ENCODE measurements at regions of chr13 and their contacts with region 1.

Region 1: GRCh38 chr13:98129059-98129746 is 13.7 kb upstream of the FARP1 start:
- DNase-seq: no peak
- H3K4me3 ChIP-seq: no peak overlapping the region
- H3K27ac ChIP-seq: no peak overlapping the region
- H3K4me1 ChIP-seq: no peaks in the 10 kb centered on the region
- H3K27me3 ChIP-seq: no peaks in the 10 kb centered on the region
- CTCF ChIP-seq: no peak
- EP300 ChIP-seq: no peak
- POLR2A ChIP-seq: no peak

Region 2: GRCh38 chr13:97798836-97799235 is 330.4 kb before region 1 on chr13:
- intact Hi-C with region 1: no loop called
- DNase-seq: no peak
- H3K4me3 ChIP-seq: no peak overlapping the region
- H3K27ac ChIP-seq: no peak overlapping the region
- H3K4me1 ChIP-seq: no peaks in the 10 kb centered on the region
- H3K27me3 ChIP-seq: no peaks in the 10 kb centered on the region
- CTCF ChIP-seq: no peak
- EP300 ChIP-seq: no peak
- POLR2A ChIP-seq: no peak

Region 3: GRCh38 chr13:98685146-98685545 is 555.9 kb after region 1 on chr13:
- intact Hi-C with region 1: loop called in 1 of 4 experiments (anchors 10 kb)
- DNase-seq: no peak
- H3K4me3 ChIP-seq: no peak overlapping the region
- H3K27ac ChIP-seq: no peak overlapping the region
- H3K4me1 ChIP-seq: no peaks in the 10 kb centered on the region
- H3K27me3 ChIP-seq: no peaks in the 10 kb centered on the region
- CTCF ChIP-seq: no peak
- EP300 ChIP-seq: no peak
- POLR2A ChIP-seq: no peak

Measured in ovary (tissue), 10 donors.